Breast epithelium (tissue), 4 donors: ENCODE measurements at regions of chr15 and their contacts with region 1.

Region 1: GRCh38 chr15:57069423-57069822 is 151.0 kb downstream of the TCF12 start:
- DNase-seq: no peak
- H3K4me3 ChIP-seq: no peak overlapping the region
- H3K27ac ChIP-seq: no peak overlapping the region
- H3K4me1 ChIP-seq: no peaks in the 10 kb centered on the region
- H3K27me3 ChIP-seq: no peaks in the 10 kb centered on the region
- CTCF ChIP-seq: no peak
- POLR2A ChIP-seq: no peak

Region 2: DNA sequence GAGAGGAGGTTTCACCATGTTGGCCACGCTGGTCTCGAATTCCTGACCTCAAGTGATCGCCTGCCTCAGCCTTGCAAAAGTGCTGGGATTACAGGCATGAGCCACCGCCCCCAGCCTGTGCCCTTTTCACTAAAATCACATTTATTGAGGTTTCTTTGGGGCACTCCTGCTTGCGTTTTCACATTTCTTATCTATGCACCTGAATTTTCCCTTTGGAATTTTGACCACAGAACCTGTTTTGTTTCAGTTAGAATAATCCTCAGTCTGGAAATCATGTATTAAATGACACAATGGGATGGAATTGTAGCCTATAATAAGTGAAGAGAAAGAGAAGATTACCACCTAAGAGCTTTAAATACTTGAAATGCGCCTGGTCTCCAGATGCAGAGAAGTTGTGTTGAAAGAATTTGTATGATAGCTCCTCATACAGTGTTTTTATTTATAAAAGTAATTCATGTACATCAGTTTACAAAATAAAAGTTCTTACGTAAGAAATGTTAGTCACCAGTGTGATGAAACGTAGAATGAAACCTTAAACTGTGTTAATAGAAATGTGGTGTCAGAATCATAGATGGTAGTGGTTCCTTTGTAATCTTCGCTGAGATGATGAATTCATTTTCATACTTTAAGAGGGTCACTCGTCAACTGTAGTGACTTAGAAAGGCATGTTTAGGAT is 44.0 kb before region 1 on chr15:
- intact Hi-C with region 1: no loop called
- DNase-seq: no peak
- H3K4me3 ChIP-seq: no peak overlapping the region
- H3K27ac ChIP-seq: no peak overlapping the region
- H3K4me1 ChIP-seq: peaks cover 0 to 10% of the 10 kb centered on the region in 2 donors
- H3K27me3 ChIP-seq: no peaks in the 10 kb centered on the region
- CTCF ChIP-seq: no peak
- POLR2A ChIP-seq: no peak

Region 3: DNA sequence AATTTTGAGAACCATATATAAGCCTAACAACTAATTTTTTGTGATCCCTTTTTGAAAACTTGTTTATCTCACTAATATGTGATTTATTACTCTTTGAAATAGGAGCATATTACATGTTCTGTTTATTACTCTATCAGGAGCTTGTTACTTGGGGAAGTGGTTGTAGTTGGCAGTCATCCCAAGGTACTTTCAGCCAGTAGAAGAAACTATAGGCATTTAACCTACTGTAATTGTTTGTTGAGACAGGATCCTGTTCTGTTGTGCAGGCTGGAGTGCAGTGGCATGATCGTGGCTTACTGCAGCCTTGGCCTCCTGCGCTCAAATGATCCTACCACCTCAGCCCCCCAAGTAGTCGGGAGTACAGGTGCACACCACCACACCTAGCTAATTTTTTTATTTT is 44.6 kb after region 1 on chr15:
- intact Hi-C with region 1: loop called (anchors 2 kb)
- DNase-seq: no peak
- H3K4me3 ChIP-seq: no peak overlapping the region
- H3K27ac ChIP-seq: no peak overlapping the region
- H3K4me1 ChIP-seq: no peaks in the 10 kb centered on the region
- H3K27me3 ChIP-seq: no peaks in the 10 kb centered on the region
- CTCF ChIP-seq: no peak
- POLR2A ChIP-seq: no peak